Natural killer cell (primary cell): ENCODE measurements at regions of chr1 and their contacts with region 1.

Region 1: GRCh38 chr1:50968158-50968820 is 1.8 kb upstream of the CDKN2C start:
- DNase-seq: peak; percentile 79 to 92
- ATAC-seq: peak; percentile 73 to 91 (median 80)
- H3K4me3 ChIP-seq: peak overlapping the region; percentile 99
- H3K4me3 Mint-ChIP-seq: peak overlapping the region; percentile 99
- H3K27ac ChIP-seq: peak overlapping the region; percentile 97
- H3K27ac Mint-ChIP-seq: peak overlapping the region; percentile 93 to 96
- H3K4me1 ChIP-seq: peaks cover 7% of the 10 kb centered on the region
- H3K4me1 Mint-ChIP-seq: peaks cover 26 to 28% of the 10 kb centered on the region in 2 donors
- H3K27me3 ChIP-seq: no peaks in the 10 kb centered on the region
- H3K27me3 Mint-ChIP-seq: no peaks in the 10 kb centered on the region
- CTCF ChIP-seq: peak; percentile 56

Region 2: GRCh38 chr1:50913954-50914353 is 54.3 kb before region 1 on chr1:
- intact Hi-C with region 1: no loop called
- DNase-seq: no peak
- ATAC-seq: no peak
- H3K4me3 ChIP-seq: no peak overlapping the region
- H3K4me3 Mint-ChIP-seq: no peak overlapping the region
- H3K27ac ChIP-seq: no peak overlapping the region
- H3K27ac Mint-ChIP-seq: no peak overlapping the region
- H3K4me1 ChIP-seq: no peaks in the 10 kb centered on the region
- H3K4me1 Mint-ChIP-seq: peaks cover 23 to 36% of the 10 kb centered on the region in 2 donors
- H3K27me3 ChIP-seq: no peaks in the 10 kb centered on the region
- H3K27me3 Mint-ChIP-seq: no peaks in the 10 kb centered on the region
- CTCF ChIP-seq: no peak

Region 3: DNA sequence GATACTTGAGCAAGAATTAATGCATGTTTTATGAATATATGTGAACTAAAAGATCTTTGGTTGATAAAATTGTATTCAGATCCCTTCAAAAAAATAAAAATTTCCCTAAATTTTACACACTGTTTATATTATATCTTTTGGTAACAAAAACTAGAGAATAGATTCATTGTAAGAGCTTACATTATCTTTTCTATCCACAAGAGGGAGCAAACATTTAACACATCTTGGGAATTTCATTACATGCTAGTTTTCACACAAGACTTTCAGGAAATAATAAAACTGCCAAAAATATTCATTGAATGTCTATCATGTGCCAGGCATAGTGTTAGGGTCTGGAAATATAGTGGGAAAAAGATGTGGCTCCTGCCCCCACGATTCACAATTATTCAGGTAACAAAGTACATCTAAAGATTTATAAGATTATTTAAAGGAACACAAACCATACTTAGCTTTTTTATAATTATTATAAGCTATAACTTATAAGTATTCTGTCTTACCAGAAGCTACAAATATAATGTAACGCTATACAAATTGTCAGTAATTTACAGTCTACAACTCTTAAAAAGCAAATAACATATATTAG is 38.8 kb before region 1 on chr1:
- intact Hi-C with region 1: loop called (anchors 10 kb)
- DNase-seq: peak in 1 of 2 donors; percentile 54
- ATAC-seq: no peak
- H3K4me3 ChIP-seq: no peak overlapping the region
- H3K4me3 Mint-ChIP-seq: no peak overlapping the region
- H3K27ac ChIP-seq: no peak overlapping the region
- H3K27ac Mint-ChIP-seq: no peak overlapping the region
- H3K4me1 ChIP-seq: no peaks in the 10 kb centered on the region
- H3K4me1 Mint-ChIP-seq: peaks cover 29 to 46% of the 10 kb centered on the region in 2 donors
- H3K27me3 ChIP-seq: no peaks in the 10 kb centered on the region
- H3K27me3 Mint-ChIP-seq: no peaks in the 10 kb centered on the region
- CTCF ChIP-seq: peak; percentile 61

Region 4: DNA sequence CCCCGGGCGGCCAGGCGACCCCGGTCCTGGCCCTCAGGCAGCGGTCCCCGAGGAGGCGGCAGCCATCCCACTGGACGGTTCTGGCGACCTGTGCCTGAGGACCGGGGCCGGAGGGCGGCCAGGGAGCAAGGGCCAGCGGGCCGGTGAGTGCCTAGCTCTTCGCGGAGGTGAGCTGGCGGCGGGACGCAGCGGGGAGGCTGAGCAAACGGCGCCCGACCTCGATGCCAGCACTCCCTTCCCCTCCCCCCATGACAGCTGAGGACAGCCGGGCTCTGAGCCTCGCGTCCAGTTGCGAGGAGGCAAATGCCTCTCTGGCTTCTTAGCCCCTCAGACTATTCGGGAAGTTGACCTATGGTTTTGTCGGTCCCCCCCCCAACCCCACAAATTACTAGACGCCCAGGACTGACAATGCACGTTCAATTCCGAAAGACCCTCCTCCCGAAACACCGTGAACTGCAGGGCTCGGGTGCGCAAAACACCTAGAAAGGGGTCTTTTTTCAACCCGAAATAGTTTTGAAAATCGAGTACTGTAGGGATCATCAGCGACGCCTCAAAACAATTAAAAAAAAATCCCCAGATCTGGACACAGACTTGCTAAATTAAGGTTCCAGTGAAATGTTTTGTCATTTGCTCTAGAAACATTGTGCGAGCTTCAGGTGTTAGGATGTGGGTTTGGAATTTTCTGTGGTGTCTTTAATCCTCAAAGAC is 10.0 kb after region 1 on chr1:
- intact Hi-C with region 1: loop called (anchors 1 kb)
- DNase-seq: peak; percentile 34 to 60
- ATAC-seq: peak; percentile 57 to 68 (median 60)
- H3K4me3 ChIP-seq: peak overlapping the region; percentile 84
- H3K4me3 Mint-ChIP-seq: peak overlapping the region; percentile 86
- H3K27ac ChIP-seq: peak overlapping the region; percentile 34
- H3K27ac Mint-ChIP-seq: peak overlapping the region; percentile 61 to 88
- H3K4me1 ChIP-seq: peaks cover 21% of the 10 kb centered on the region
- H3K4me1 Mint-ChIP-seq: peaks cover 18 to 21% of the 10 kb centered on the region in 2 donors
- H3K27me3 ChIP-seq: peaks cover 2% of the 10 kb centered on the region
- H3K27me3 Mint-ChIP-seq: no peaks in the 10 kb centered on the region
- CTCF ChIP-seq: no peak

Region 5: GRCh38 chr1:52636721-52637695 is 1668.7 kb after region 1 on chr1:
- intact Hi-C with region 1: loop called (anchors 10 kb)
- DNase-seq: peak; percentile 56 to 87
- ATAC-seq: peak; percentile 49 to 80 (median 72)
- H3K4me3 ChIP-seq: no peak overlapping the region
- H3K4me3 Mint-ChIP-seq: peak overlapping the region; percentile 82
- H3K27ac ChIP-seq: peak overlapping the region; percentile 97
- H3K27ac Mint-ChIP-seq: peak overlapping the region; percentile 96 to 98
- H3K4me1 ChIP-seq: peaks cover 83% of the 10 kb centered on the region
- H3K4me1 Mint-ChIP-seq: peaks cover 76 to 88% of the 10 kb centered on the region in 2 donors
- H3K27me3 ChIP-seq: no peaks in the 10 kb centered on the region
- H3K27me3 Mint-ChIP-seq: no peaks in the 10 kb centered on the region
- CTCF ChIP-seq: no peak